ENCODE measurements at regions of chr3 and their contacts with region 1.

Region 1: DNA sequence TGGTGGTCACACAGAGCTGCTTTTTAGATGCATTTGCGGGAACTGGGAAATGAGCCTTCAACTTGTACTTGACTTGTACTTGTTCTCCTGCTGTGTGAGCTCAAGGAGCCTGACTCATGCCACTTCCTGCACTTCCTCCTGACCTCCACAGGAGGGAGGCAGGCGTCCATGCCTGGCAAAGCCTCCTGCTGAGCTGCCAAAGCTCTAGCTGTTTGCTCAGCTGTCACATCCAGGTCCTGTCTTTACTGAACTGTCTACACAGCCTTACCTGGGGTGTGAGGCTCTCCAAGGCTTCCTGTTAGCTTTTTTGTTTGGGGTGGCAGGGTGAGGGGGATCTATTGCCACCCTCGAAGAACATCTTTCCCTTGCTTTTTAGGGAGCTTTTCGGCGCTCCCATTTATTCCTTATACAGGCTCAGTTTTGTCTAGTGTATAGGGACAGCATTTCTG is 6.4 kb downstream of the THPO start:
- DNase-seq: peak; percentile 84
- ATAC-seq: peak; percentile 92
- H3K4me3 ChIP-seq: no peak overlapping the region
- H3K27ac ChIP-seq: peak overlapping the region; percentile 18
- H3K4me1 ChIP-seq: peaks cover 30% of the 10 kb centered on the region
- H3K27me3 ChIP-seq: no peaks in the 10 kb centered on the region
- CTCF ChIP-seq: peak; percentile 98
- EP300 ChIP-seq: peak in 1 of 2 experiments; percentile 23; a peak in 1 of 4 replicates
- POLR2A ChIP-seq: peak in 1 of 2 experiments; percentile 49; a peak in 1 of 4 replicates
- RAD21 ChIP-seq: peak; percentile 98

Region 2: GRCh38 chr3:183161552-183162336 is 1209.8 kb before region 1 on chr3:
- CTCF ChIA-PET with region 1: no interaction called
- POLR2A ChIA-PET with region 1: no interaction called
- in situ Hi-C with region 1: no loop called
- intact Hi-C with region 1: loop called (anchors 5 kb)
- DNase-seq: no peak
- ATAC-seq: peak; percentile 29; the same call in 1 of the 3 replicates
- H3K4me3 ChIP-seq: peak overlapping the region in 2 of 3 experiments; percentile 36 to 59; a peak in 3 of 6 replicates
- H3K27ac ChIP-seq: no peak overlapping the region
- H3K4me1 ChIP-seq: peaks cover 10% of the 10 kb centered on the region
- H3K27me3 ChIP-seq: peaks cover 2 to 15% of the 10 kb centered on the region in 2 experiments; a peak in 3 of 5 replicates
- CTCF ChIP-seq: peak; percentile 24; the same call in 1 of the 2 replicates
- EP300 ChIP-seq: no peak
- POLR2A ChIP-seq: no peak
- RAD21 ChIP-seq: no peak

Region 3: GRCh38 chr3:183959214-183959613 is 412.4 kb before region 1 on chr3:
- CTCF ChIA-PET with region 1: no interaction called
- POLR2A ChIA-PET with region 1: no interaction called
- in situ Hi-C with region 1: no loop called
- intact Hi-C with region 1: no loop called
- DNase-seq: peak; percentile 13
- ATAC-seq: no peak
- H3K4me3 ChIP-seq: no peak overlapping the region
- H3K27ac ChIP-seq: no peak overlapping the region
- H3K4me1 ChIP-seq: peaks cover 8% of the 10 kb centered on the region
- H3K27me3 ChIP-seq: no peaks in the 10 kb centered on the region
- CTCF ChIP-seq: no peak
- EP300 ChIP-seq: peak in 1 of 2 experiments; percentile 31; a peak in 1 of 4 replicates
- POLR2A ChIP-seq: no peak
- RAD21 ChIP-seq: no peak

Region 4: GRCh38 chr3:184135149-184135910 is 236.3 kb before region 1 on chr3 and contains the start of gene EIF2B5:
- CTCF ChIA-PET with region 1: no interaction called
- POLR2A ChIA-PET with region 1: no interaction called
- in situ Hi-C with region 1: no loop called
- intact Hi-C with region 1: no loop called
- DNase-seq: peak; percentile 95
- ATAC-seq: peak; percentile 89
- H3K4me3 ChIP-seq: peak within 1 kb of the TSS; percentile 86 to 94 (median 93)
- H3K27ac ChIP-seq: peak within 1 kb of the TSS; percentile 61
- H3K4me1 ChIP-seq: peaks cover 23% of the 10 kb centered on the region
- H3K27me3 ChIP-seq: no peaks in the 10 kb centered on the region; a peak in 1 of 5 replicates
- CTCF ChIP-seq: peak; percentile 73
- EP300 ChIP-seq: 0 out of 4 replicates have a peak, but pooled peaks of 1 of the 2 experiments have one; percentile 3
- POLR2A ChIP-seq: peak; percentile 87 to 95
- RAD21 ChIP-seq: peak; percentile 41
- total RNA-seq, gene EIF2B5: 60.2 and 60.3 TPM in 2 replicates

Region 5: GRCh38 chr3:184469423-184469822 is 97.8 kb after region 1 on chr3:
- CTCF ChIA-PET with region 1: interaction called, 11 read pairs
- POLR2A ChIA-PET with region 1: interaction called, 7 read pairs
- in situ Hi-C with region 1: loop called (anchors 10 kb)
- intact Hi-C with region 1: loop called (anchors 1 kb)
- DNase-seq: peak; percentile 25
- ATAC-seq: peak; percentile 68
- H3K4me3 ChIP-seq: no peak overlapping the region
- H3K27ac ChIP-seq: no peak overlapping the region
- H3K4me1 ChIP-seq: peaks cover 10% of the 10 kb centered on the region
- H3K27me3 ChIP-seq: peaks cover 1 to 34% of the 10 kb centered on the region in 2 experiments; a peak in 3 of 5 replicates
- CTCF ChIP-seq: peak; percentile 76
- EP300 ChIP-seq: no peak
- POLR2A ChIP-seq: no peak
- RAD21 ChIP-seq: no peak

Region 6: GRCh38 chr3:184513276-184514170 is 141.9 kb after region 1 on chr3:
- CTCF ChIA-PET with region 1: interaction called, 20 read pairs
- POLR2A ChIA-PET with region 1: interaction called, 21 read pairs
- in situ Hi-C with region 1: loop called (anchors 10 kb)
- intact Hi-C with region 1: loop called (anchors 2 kb)
- DNase-seq: peak; percentile 58
- ATAC-seq: peak; percentile 100
- H3K4me3 ChIP-seq: peak overlapping the region; percentile 26 to 70 (median 45); a peak in 4 of 6 replicates
- H3K27ac ChIP-seq: no peak overlapping the region
- H3K4me1 ChIP-seq: no peaks in the 10 kb centered on the region; the same call in 1 of the 2 replicates
- H3K27me3 ChIP-seq: peaks cover 8 to 58% of the 10 kb centered on the region in 2 experiments; a peak in 4 of 5 replicates
- CTCF ChIP-seq: peak; percentile 92
- EP300 ChIP-seq: no peak
- POLR2A ChIP-seq: no peak
- RAD21 ChIP-seq: peak; percentile 81

Measured in HepG2 (cell line).